ENCODE measurements at regions of chr4 and their contacts with region 1.

Region 1: DNA sequence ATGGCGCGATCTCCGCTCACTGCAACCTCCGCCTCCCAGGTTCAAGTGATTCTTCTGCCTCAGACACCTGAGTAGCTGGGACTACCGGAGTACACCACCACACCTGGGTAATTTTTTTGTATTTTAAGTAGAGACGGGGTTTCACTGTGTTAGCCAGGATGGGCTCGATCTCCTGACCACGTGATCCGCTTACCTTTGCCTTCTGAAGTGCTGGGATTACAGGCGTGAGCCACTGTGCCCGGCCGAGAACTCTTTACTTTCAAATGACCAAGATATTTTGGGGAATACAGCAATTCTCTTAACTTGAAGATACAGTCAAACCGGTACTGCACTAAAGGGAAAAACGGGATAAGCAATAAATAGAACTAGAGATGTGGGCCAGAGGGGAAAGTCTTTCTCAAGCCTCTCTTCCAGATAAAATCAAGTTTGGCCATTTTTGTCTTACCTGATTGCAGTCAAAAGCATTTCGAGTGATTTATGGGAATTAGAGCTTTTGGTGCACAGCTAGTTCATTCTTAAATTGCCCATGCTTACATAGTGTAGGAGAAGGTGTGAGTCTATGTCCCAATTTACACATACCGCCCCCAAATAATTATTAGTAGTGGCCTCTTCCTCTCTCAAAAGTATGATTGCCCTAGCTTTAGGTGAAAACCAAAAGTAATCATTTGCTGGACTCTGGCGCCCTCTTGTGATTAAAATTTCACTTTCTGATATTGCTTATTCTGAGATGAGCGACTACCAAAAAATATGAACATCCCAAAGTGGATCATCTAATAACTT is 53.2 kb upstream of the ABCG2 start:
- DNase-seq: peak; percentile 14 to 23
- H3K4me3 ChIP-seq: no peak overlapping the region
- H3K27ac ChIP-seq: no peak overlapping the region
- H3K4me1 ChIP-seq: peaks cover 0 to 3% of the 10 kb centered on the region in 2 donors
- H3K27me3 ChIP-seq: no peaks in the 10 kb centered on the region
- CTCF ChIP-seq: peak in 5 of 6 experiments; percentile 53 to 87 (median 70)
- POLR2A ChIP-seq: no peak

Region 2: GRCh38 chr4:87679449-87680169 is 532.1 kb before region 1 on chr4:
- intact Hi-C with region 1: loop called (anchors 10 kb)
- DNase-seq: peak; percentile 9 to 26
- H3K4me3 ChIP-seq: no peak overlapping the region
- H3K27ac ChIP-seq: no peak overlapping the region
- H3K4me1 ChIP-seq: no peaks in the 10 kb centered on the region
- H3K27me3 ChIP-seq: no peaks in the 10 kb centered on the region
- CTCF ChIP-seq: peak; percentile 35 to 82 (median 54)
- POLR2A ChIP-seq: no peak

Region 3: GRCh38 chr4:87853108-87853507 is 358.6 kb before region 1 on chr4:
- intact Hi-C with region 1: loop called (anchors 10 kb)
- DNase-seq: no peak
- H3K4me3 ChIP-seq: no peak overlapping the region
- H3K27ac ChIP-seq: no peak overlapping the region
- H3K4me1 ChIP-seq: peaks cover 0 to 5% of the 10 kb centered on the region in 2 donors
- H3K27me3 ChIP-seq: no peaks in the 10 kb centered on the region
- CTCF ChIP-seq: peak in 4 of 6 experiments; percentile 12 to 54 (median 48)
- POLR2A ChIP-seq: no peak

Region 4: DNA sequence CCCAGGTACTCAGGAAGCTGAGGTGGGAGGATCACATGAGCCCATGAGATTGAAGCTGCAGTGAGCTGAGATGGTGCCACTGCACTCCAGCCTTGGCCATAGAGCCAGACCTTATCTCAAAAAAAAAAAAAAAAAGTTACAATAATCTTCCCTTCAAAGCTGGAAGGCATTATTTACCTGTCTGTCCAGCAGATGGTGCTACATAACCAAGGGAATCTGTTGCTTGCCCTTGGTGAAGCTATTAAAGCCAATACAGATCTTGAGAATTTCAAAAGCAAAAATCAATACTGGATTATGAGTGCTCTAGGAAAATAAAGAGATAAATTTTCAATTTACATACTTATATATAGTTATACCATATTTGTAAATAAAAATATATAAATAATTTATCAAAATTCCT is 178.4 kb before region 1 on chr4:
- intact Hi-C with region 1: loop called (anchors 2 kb)
- DNase-seq: peak; percentile 27 to 33
- H3K4me3 ChIP-seq: no peak overlapping the region
- H3K27ac ChIP-seq: no peak overlapping the region
- H3K4me1 ChIP-seq: no peaks in the 10 kb centered on the region
- H3K27me3 ChIP-seq: no peaks in the 10 kb centered on the region
- CTCF ChIP-seq: peak; percentile 30 to 75 (median 53)
- POLR2A ChIP-seq: no peak

Region 5: GRCh38 chr4:88366460-88366859 is 154.8 kb after region 1 on chr4:
- intact Hi-C with region 1: loop called (anchors 5 kb)
- DNase-seq: no peak
- H3K4me3 ChIP-seq: no peak overlapping the region
- H3K27ac ChIP-seq: no peak overlapping the region
- H3K4me1 ChIP-seq: no peaks in the 10 kb centered on the region
- H3K27me3 ChIP-seq: no peaks in the 10 kb centered on the region
- CTCF ChIP-seq: no peak
- POLR2A ChIP-seq: no peak

Measured in thyroid gland (tissue), 4 donors.